Left cardiac atrium (tissue), 4 donors: ENCODE measurements at regions of chr20 and their contacts with region 1.

Region 1: DNA sequence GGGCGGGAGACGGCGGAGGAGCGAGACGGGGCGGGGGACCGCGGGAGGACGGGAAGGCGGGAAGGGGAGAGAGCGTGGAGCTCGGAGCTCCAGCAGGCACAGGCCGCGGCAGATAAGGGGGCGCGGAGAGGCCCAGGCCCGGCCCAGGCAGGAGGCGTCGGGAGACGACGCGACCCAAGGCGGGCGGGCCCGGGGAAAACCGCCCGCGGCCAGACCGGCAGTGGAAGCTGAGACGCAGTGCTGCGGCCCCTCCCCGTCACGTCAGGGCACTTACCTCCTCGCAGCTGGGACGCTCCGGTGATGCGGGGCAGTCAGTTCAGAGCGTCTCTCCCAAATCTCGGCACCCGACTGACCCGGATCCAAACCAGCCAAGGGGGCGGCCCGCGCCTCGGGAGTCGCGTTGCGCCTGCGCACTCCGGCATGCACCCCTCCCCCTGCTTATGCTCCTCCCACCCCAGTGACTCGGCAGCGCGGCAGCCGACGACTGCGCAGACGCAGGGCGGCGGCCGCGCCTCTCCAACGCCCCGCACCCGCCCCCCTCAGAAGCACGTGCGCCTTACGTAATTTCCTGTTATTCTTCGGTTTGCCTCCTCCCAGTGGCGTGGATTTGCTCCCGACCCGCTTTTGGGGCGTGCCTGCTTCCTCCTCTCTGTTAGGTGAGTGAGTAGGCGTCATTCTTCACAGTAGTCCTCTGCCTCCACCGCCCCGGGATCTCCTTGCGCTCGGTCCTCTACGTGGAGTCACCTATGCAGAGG is at the start of gene OSER1:
- DNase-seq: peak; percentile 96
- ATAC-seq: peak; percentile 94 to 95
- total RNA-seq, gene OSER1: 19.9 to 28.5 TPM

Region 2: DNA sequence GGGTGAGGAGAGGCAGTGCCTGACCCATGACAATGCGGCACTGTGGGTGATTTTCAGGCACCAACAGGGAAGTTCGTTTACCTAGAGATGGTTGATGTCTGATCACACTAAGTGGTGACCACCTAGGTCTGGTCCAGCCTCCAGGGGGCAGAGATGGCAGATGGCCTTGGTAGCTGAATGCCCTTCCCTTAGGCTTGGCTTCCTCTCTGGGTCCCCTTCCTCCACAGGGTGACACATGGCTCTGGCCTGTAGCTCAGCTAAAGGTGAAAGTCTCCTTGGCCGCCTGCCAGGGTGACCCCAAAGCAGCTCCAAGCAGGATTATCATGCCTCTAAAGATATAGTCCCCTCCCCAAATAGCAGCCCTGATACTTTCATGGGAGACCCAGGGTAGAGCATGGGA is 42.9 kb after region 1 on chr20:
- intact Hi-C with region 1: no loop called
- DNase-seq: no peak
- ATAC-seq: no peak

Region 3: DNA sequence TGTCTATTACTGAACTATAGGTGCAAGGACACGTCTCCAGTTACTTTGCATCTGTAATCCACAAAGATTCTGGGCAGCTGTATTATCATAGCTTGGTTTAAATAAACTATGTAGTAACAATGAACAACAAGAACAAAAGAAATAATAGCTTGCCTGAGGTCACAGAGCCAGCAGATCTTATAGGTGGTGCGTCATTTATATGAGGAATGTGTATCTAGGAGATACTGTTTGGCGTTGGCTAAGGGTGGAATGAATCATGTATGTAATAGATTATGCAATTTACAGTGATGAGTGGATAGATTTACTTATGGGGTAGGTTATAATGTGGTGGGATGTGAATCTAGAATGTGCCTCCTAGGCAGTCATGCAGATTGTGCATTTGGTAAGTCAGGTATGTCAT is 187.7 kb after region 1 on chr20:
- intact Hi-C with region 1: no loop called
- DNase-seq: no peak
- ATAC-seq: no peak

Region 4: DNA sequence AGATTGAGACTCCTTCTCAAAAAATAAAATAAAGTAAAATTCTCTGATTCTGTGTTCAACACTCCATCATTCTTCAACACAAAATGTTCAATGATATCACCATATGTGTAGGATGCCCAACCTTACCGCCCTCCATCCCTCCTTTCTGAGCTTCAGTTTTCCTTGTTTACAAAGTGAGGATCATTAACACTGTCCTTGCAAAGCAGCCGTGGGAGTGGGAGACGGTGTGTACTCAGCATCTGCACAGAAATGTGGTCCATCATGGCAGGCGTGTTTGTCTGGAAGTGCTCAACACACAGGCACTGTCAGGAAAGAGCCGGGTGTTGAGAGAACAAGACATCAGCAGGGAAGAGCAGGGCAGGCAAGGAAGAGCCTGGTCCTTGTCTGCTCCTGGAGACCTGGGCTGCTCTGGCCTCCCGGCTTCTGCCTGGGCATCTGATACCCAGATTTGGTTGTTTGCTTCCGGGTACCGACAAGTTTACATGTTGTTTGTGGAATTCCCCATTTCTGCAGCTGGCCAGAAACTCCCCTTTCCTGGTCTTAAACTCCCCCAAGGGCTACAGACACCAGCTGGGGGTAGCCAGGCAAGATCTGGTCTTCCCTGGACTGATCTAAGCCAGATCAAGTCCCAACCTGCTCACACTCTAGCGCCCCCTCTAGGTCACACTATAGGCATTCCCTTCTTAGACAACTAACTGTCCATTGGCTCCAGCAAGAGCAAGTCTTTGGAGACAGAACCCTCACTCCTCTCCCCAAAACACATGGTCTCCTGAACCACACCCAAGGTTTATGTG is 238.4 kb after region 1 on chr20:
- intact Hi-C with region 1: no loop called
- DNase-seq: no peak
- ATAC-seq: no peak

Region 5: GRCh38 chr20:44475694-44476560 is 265.3 kb after region 1 on chr20 and contains the start of gene TTPAL:
- intact Hi-C with region 1: loop called (anchors 5 to 10 kb)
- DNase-seq: peak; percentile 92
- ATAC-seq: peak; percentile 99
- total RNA-seq, gene TTPAL: 7.2 to 7.6 TPM

Region 6: DNA sequence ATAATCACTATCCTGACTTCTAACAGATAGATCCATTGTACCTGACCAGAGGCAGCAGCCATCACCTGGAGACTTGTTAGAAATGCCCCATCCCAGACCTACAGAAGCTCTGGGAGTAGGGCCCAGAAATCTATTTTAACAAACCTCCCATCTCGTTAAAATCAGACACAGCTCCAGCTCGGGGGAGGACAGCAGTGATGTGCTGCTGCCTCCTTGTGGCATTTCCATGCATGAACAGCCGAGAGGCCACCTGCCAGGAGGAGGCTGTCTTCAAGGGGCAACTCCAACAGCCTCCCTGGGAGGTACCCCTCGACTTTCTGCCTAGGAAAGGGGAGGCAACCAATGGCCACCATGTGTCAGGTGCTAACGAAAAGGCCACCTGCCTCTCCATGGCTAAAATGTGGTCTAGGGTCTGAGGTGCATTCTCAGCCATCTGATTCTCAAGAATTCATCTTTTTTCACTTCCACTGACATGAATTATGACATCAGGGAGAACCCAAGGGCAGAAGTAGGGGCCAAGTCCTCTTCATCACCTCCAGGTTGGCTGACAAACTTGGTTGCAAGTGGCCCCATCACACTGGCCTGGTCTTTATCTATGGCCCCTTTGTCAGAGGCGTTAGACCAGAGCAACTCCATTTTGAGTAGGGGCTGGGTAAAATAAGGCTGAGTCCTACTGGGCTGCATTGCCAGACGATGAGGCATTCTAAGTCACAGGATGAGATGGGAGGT is 522.9 kb after region 1 on chr20:
- intact Hi-C with region 1: loop called in 1 of 2 experiments (anchors 10 kb)
- DNase-seq: peak; percentile 76
- ATAC-seq: peak; percentile 42 to 60